AG04450 (cell line): ENCODE measurements at regions of chr20 and their contacts with region 1.

Region 1: GRCh38 chr20:35954200-35954906 is at the start of gene SCAND1:
- DNase-seq: peak; percentile 94
- H3K4me3 ChIP-seq: peak within 1 kb of the TSS; percentile 91
- H3K27ac ChIP-seq: peak within 1 kb of the TSS; percentile 99
- H3K27me3 ChIP-seq: no peaks in the 10 kb centered on the region
- CTCF ChIP-seq: peak; percentile 96
- polyA plus RNA-seq, gene SCAND1: 7.4 and 11.1 TPM in 2 replicates

Region 2: GRCh38 chr20:35942243-35942642 is 12.1 kb before region 1 on chr20:
- CTCF ChIA-PET with region 1: interaction called, 22 read pairs
- POLR2A ChIA-PET with region 1: interaction called, 4 read pairs
- DNase-seq: no peak
- H3K4me3 ChIP-seq: no peak overlapping the region
- H3K27ac ChIP-seq: no peak overlapping the region
- H3K27me3 ChIP-seq: no peaks in the 10 kb centered on the region
- CTCF ChIP-seq: no peak

Region 3: GRCh38 chr20:35968931-35969330 is 14.6 kb after region 1 on chr20:
- CTCF ChIA-PET with region 1: interaction called, 23 read pairs
- POLR2A ChIA-PET with region 1: no interaction called
- DNase-seq: no peak
- H3K4me3 ChIP-seq: no peak overlapping the region
- H3K27ac ChIP-seq: no peak overlapping the region
- H3K27me3 ChIP-seq: peaks cover 8% of the 10 kb centered on the region
- CTCF ChIP-seq: no peak

Region 4: DNA sequence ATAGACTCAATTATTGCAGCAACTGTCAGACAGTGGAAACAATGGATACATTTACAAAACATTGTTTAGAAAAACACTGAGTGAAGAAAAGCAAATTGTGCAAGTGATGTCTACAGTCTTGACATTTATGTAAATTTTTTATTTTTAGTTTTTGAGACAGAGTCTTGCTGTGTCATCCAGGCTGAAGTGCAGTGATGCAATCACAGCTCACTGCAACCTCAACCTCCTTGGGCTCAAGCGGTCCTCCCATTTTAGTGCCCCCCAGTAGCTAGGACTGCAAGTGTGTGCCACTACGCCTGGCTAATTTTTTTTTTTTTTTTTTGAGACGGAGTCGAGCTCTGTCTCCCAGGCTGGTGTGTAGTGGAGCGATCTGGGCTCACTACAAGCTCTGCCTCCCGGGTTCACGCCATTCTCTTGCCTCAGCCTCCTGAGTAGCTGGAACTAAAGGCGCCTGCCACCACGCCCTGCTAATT is 23.7 kb after region 1 on chr20:
- CTCF ChIA-PET with region 1: interaction called, 14 read pairs
- POLR2A ChIA-PET with region 1: no interaction called
- DNase-seq: no peak
- H3K4me3 ChIP-seq: no peak overlapping the region
- H3K27ac ChIP-seq: no peak overlapping the region
- H3K27me3 ChIP-seq: peaks cover 15% of the 10 kb centered on the region
- CTCF ChIP-seq: no peak

Region 5: DNA sequence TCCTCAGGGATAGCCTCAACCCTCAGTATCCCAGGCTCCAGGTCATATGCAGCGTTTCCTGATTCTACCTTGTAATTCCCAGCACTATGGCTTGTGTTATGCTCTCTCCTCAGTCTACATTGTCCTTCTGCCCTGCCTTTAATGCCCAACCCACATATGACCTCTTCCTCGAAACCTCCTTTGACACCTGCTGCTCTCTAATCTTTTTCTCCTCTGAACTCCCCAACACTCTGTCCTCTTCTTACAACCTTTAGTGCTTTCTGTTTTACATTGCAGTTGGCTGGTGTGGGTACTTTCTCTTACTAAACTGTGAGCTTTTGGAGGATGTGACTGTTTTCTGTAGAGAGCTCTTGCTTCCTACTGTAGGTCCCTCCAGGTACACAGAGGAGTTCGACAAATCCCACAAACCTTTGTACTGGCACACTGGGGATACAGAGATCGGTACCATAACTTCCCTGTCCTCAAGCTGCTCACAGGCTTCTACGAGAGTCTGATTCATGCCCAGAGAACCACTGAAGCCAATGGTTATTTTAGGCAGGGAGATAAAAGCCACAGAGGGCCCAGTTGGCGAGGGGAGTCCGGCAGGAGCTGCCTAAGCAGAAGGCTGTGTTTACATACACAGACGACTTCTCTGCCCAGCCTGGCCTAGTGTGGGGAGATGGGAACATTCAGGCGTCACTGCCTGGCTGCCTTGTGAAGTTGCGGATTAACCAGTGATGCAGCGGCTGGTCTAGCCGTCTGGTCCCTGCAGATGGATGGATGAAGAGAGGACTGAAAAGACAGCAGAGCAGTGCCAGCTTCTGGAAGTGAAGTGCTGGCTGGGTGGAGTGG is 191.7 kb after region 1 on chr20:
- CTCF ChIA-PET with region 1: interaction called, 13 read pairs
- POLR2A ChIA-PET with region 1: no interaction called
- DNase-seq: no peak
- H3K4me3 ChIP-seq: no peak overlapping the region
- H3K27ac ChIP-seq: peak overlapping the region; percentile 21
- H3K27me3 ChIP-seq: peaks cover 17% of the 10 kb centered on the region
- CTCF ChIP-seq: no peak